ENCODE measurements at regions of chr2 and their contacts with region 1.

Region 1: DNA sequence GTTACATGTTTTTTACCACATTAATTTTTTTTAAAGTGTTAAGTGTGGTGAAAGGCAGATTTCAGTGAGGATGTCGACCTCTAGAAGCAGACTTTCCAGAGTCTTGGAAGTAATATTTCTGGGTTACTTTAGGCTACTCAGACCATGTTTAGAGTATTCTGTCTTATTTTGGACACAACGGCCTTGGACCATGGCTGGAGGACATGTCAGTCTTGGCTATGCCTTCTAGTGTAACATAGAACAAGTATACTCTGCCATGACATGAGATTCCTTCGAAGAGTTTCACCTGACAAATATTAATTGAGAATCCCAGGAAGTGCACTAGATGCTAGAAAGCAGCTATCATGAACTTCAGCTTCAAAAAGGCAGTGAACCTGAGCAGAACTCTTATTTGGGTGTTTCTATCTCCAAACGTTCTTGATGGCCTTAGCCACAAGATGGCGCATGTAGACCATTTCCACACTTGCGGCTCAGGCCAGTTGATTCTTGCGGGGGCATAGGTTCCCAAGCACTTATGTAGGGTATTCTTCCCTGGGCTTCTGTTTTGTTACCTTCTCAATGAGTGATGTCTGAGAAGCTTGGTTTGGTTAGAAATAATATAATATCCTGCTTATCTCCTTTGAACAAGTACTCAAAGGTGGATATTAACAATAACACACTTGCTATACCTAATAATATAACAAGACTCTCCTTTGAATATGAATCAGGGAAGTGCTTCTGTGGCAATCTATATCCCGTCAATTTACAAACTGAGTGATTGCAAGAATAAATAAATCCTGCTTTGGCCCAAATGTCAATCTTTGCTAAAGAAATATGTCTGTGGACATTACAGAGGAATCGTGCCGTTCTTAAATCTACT is 62.0 kb downstream of the CACNB4 start:
- DNase-seq: peak; percentile 73
- ATAC-seq: peak; percentile 83
- H3K4me3 ChIP-seq: no peak overlapping the region
- H3K27ac ChIP-seq: no peak overlapping the region
- H3K4me1 ChIP-seq: no peaks in the 10 kb centered on the region
- H3K27me3 ChIP-seq: peaks cover 2 to 30% of the 10 kb centered on the region in 2 experiments; a peak in 2 of 5 replicates
- CTCF ChIP-seq: peak; percentile 93
- EP300 ChIP-seq: no peak
- POLR2A ChIP-seq: no peak
- RAD21 ChIP-seq: peak; percentile 77

Region 2: DNA sequence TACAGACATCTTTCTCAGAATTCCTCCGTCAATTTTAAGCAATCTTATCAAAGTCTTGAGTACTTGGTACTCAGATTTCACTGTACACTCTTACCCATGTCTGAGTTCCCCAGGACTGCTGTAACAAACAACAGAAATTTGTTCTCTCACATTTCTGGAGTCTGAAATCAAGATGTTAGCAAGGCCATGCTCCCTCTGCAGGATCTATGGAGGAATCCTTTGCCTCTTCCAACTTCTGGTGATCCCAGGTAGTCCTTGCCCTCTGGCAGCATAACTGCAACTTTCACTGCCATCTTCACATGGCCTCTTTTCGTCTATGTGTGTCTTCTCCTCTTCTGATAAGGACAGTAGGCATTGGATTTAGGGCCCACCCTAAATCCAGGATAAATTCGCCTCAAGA is 79.1 kb after region 1 on chr2:
- CTCF ChIA-PET with region 1: interaction called, 6 read pairs
- POLR2A ChIA-PET with region 1: no interaction called
- in situ Hi-C with region 1: no loop called
- intact Hi-C with region 1: loop called (anchors 1 kb)
- DNase-seq: no peak
- ATAC-seq: peak; percentile 66
- H3K4me3 ChIP-seq: no peak overlapping the region
- H3K27ac ChIP-seq: no peak overlapping the region
- H3K4me1 ChIP-seq: no peaks in the 10 kb centered on the region
- H3K27me3 ChIP-seq: no peaks in the 10 kb centered on the region
- CTCF ChIP-seq: no peak
- EP300 ChIP-seq: no peak
- POLR2A ChIP-seq: no peak
- RAD21 ChIP-seq: no peak

Region 3: DNA sequence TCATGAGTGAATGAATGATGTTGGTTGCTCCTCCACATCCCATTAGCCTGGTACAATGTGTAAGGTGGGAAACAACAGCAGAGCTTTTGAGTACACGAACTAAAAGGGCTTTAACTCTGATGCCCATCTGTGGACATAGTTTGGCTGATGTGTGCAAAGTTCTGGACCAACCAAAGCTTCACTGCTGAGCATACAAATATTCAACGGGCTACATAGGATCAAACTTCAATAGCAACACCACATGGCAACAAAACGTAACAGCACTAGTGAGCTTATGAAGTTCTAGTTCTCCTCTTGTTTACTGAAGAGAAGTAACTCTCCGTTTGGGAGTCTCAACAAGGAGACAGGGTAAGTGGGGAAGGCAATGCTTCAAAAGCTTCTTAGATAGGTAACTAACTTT is 118.4 kb after region 1 on chr2:
- CTCF ChIA-PET with region 1: interaction called, 3 read pairs
- POLR2A ChIA-PET with region 1: no interaction called
- in situ Hi-C with region 1: no loop called
- intact Hi-C with region 1: loop called (anchors 5 kb)
- DNase-seq: peak; percentile 58
- ATAC-seq: peak; percentile 97
- H3K4me3 ChIP-seq: no peak overlapping the region
- H3K27ac ChIP-seq: no peak overlapping the region
- H3K4me1 ChIP-seq: peaks cover 11% of the 10 kb centered on the region
- H3K27me3 ChIP-seq: no peaks in the 10 kb centered on the region
- CTCF ChIP-seq: peak; percentile 54
- EP300 ChIP-seq: no peak
- POLR2A ChIP-seq: no peak
- RAD21 ChIP-seq: no peak

Region 4: GRCh38 chr2:152635635-152636298 is 598.9 kb after region 1 on chr2:
- CTCF ChIA-PET with region 1: interaction called, 6 read pairs
- POLR2A ChIA-PET with region 1: no interaction called
- in situ Hi-C with region 1: loop called (anchors 10 kb)
- intact Hi-C with region 1: loop called (anchors 2 kb)
- DNase-seq: peak; percentile 76
- ATAC-seq: peak; percentile 77
- H3K4me3 ChIP-seq: no peak overlapping the region
- H3K27ac ChIP-seq: no peak overlapping the region
- H3K4me1 ChIP-seq: peaks cover 5% of the 10 kb centered on the region; the same call in 1 of the 2 replicates
- H3K27me3 ChIP-seq: no peaks in the 10 kb centered on the region
- CTCF ChIP-seq: peak; percentile 94
- EP300 ChIP-seq: no peak
- POLR2A ChIP-seq: no peak
- RAD21 ChIP-seq: peak; percentile 87

Region 5: GRCh38 chr2:153287110-153287801 is 1250.4 kb after region 1 on chr2:
- CTCF ChIA-PET with region 1: no interaction called
- POLR2A ChIA-PET with region 1: no interaction called
- in situ Hi-C with region 1: no loop called
- intact Hi-C with region 1: loop called (anchors 10 kb)
- DNase-seq: peak; percentile 48
- ATAC-seq: peak; percentile 99
- H3K4me3 ChIP-seq: peak overlapping the region in 1 of 3 experiments; percentile 57; a peak in 1 of 6 replicates
- H3K27ac ChIP-seq: no peak overlapping the region
- H3K4me1 ChIP-seq: peaks cover 7% of the 10 kb centered on the region
- H3K27me3 ChIP-seq: no peaks in the 10 kb centered on the region
- CTCF ChIP-seq: peak; percentile 78
- EP300 ChIP-seq: no peak
- POLR2A ChIP-seq: no peak
- RAD21 ChIP-seq: peak; percentile 19; the same call in 1 of the 2 replicates